ENCODE measurements at regions of chr2 and their contacts with region 1.

Region 1: DNA sequence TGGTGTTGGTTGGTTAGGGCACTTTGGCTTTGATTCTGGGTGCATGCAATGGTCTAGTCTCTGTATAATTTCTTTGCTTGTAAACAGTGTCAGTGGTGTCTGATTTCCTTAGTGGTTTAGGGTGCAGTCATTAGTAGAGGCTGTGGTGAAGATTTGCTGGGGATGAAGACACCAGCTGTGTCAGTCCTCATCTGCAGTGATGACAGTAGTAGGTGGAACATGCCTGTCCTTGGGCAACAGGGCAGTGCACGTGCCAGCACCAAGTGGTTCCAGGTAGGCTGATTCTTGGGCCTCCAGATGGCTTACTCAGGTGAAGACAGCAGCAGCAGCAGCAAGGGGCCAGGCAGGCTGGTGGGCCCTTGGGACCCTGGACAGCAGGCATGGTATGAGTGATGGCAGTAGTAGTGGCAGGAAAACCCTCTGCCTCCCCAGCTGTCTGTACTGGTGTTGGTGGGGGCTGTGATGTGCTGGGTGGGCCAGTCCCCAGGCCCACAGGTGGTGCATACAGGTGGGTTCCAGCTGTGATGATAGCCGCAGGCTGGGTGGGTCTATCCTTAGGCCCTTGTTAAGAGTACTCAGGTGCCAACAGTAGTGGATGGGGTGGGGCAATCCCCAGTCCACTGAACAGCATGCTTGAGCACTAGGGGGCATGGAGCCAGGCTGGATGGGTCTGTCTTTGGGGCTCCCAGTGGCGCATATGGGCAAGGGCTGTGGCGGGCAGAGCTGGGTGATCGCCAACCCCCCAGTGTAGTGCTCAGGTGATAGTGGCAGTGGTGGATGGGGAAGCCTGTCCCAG is 140.7 kb upstream of the THUMPD2 start:
- DNase-seq: peak; percentile 41
- H3K4me3 Mint-ChIP-seq: peak overlapping the region; percentile 49
- H3K27ac Mint-ChIP-seq: peak overlapping the region; percentile 73
- H3K4me1 Mint-ChIP-seq: peaks cover 45% of the 10 kb centered on the region
- H3K27me3 Mint-ChIP-seq: no peaks in the 10 kb centered on the region

Region 2: DNA sequence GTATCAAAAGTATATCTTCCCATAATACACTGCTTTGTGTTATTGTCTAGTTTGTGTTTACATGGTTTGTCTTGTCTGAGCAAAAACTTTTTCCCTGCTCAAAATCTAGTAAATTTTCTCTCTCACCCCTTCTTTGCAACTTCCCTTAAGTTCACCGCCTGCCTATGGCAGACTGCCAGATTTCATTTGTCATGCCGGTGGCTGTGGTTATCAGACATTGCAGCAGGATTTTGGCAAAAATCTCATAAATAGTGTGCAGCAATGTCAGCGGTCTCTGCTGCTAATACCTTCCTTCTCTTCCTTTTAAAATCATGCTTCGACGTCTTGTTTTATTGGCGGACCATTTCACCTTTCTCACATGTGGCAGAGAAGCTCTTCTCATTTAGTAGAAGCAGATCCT is 299.6 kb before region 1 on chr2:
- CTCF ChIA-PET with region 1: no interaction called
- POLR2A ChIA-PET with region 1: no interaction called
- DNase-seq: no peak
- H3K4me3 Mint-ChIP-seq: no peak overlapping the region
- H3K27ac Mint-ChIP-seq: no peak overlapping the region
- H3K4me1 Mint-ChIP-seq: no peaks in the 10 kb centered on the region
- H3K27me3 Mint-ChIP-seq: peaks cover 32% of the 10 kb centered on the region

Region 3: DNA sequence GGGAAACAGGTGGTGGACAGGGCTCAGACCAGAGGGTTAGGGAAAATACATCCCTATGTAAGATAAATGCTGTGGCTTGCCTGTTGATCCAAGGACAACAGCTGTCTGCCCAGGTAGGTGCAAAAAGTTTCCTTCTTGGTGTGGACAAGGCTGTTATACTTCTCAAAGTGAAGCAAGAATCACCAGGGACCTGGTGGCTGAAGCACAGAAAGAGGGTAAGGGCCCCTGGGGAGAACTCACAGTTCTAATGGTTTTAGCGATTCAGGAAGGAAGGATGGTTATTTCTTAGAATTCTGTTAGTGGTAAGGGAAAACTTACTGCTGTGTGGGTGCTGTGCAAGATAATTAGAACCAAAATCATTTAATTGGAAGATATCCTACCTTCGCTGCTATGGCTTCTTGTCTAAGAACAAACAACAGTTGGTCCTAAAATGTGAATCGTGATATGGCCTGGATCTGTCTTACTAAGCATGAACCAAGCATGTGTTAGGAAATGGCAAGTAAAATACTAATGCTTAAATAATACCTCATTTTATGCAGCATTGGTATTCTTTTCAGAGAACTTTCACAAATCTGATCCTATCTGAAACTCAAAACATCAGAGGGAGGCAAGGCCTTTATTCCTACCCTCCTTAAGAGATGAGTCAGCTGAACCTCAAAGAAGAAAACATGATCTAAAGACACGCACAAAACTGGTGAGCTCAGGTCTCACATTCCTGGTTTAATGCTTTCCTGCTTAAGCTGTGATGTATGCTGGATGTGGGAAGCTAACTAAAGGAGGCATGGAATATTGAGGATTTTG is 18.5 kb after region 1 on chr2:
- CTCF ChIA-PET with region 1: interaction called, 5 read pairs
- POLR2A ChIA-PET with region 1: interaction called, 10 read pairs
- DNase-seq: no peak
- H3K4me3 Mint-ChIP-seq: peak overlapping the region; percentile 21
- H3K27ac Mint-ChIP-seq: peak overlapping the region; percentile 86
- H3K4me1 Mint-ChIP-seq: peaks cover 54% of the 10 kb centered on the region
- H3K27me3 Mint-ChIP-seq: no peaks in the 10 kb centered on the region

Region 4: DNA sequence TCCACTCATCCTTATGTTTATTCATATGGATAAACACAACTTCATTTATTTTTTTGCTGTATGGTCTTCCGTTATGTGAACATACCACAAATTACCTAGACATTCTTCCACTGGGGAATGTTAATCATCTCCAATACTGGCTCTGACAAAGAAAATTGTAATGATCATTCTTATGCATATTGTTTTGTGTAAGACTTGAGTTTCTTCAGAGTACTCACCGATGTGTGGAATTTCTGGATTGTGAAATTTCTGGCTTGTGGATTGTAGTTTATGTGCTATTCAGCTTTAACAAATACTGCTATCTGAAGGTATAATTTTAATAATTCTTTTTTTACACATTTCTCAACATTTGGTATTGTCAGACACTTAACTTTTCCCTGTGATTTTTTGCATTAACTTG is 71.6 kb after region 1 on chr2:
- CTCF ChIA-PET with region 1: no interaction called
- POLR2A ChIA-PET with region 1: no interaction called
- DNase-seq: no peak
- H3K4me3 Mint-ChIP-seq: no peak overlapping the region
- H3K27ac Mint-ChIP-seq: no peak overlapping the region
- H3K4me1 Mint-ChIP-seq: peaks cover 11% of the 10 kb centered on the region
- H3K27me3 Mint-ChIP-seq: no peaks in the 10 kb centered on the region